ENCODE measurements at regions of chr3 and their contacts with region 1.

Region 1: GRCh38 chr3:149936812-149937233 is 33.9 kb downstream of the PFN2 start:
- DNase-seq: no peak
- ATAC-seq: peak; percentile 81 to 88 (median 86)
- H3K4me3 ChIP-seq: peak overlapping the region; percentile 31
- H3K27ac ChIP-seq: no peak overlapping the region
- H3K4me1 ChIP-seq: peaks cover 8% of the 10 kb centered on the region
- H3K27me3 ChIP-seq: no peaks in the 10 kb centered on the region
- CTCF ChIP-seq: peak; percentile 79

Region 2: DNA sequence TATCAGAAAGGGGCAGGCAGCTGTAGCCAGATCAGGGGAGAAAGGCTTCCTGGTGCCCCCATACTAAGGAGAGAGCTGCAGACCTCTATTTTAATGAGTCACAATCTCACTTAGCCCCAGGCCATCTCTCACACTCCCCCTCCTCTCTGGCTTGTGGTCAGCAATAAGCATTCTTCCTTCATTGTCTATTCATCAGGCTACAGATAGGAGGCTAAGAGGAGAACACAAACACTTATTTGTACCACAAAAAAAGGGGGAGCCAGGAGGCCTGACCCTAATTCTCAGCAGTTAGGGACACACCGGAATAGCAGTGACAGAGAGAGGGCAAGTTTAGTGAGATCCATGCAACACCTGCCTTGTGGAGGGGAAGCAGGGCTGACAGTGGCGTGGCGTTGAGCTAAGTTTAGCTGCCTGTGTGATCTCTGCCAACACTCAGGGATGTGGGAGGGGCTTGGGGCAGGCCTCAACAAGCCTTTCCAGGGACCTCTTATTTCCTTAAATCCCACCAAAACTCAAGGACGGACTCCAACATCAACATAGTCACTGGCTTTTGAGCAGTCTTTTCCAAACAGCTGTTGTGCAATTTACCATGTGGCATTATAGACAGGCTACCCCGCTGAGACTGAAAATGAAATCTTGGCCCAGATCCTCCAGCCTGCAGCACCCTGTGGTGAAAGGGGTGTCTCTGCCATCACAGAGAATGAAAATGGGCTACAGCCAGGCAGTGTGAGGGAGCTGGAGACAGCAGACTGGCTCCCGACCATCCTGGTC is 279.4 kb after region 1 on chr3:
- intact Hi-C with region 1: loop called (anchors 2 to 5 kb)
- DNase-seq: peak; percentile 47 to 71
- ATAC-seq: peak; percentile 91 to 96 (median 94)
- H3K4me3 ChIP-seq: peak overlapping the region; percentile 38
- H3K27ac ChIP-seq: peak overlapping the region; percentile 79
- H3K4me1 ChIP-seq: peaks cover 9% of the 10 kb centered on the region
- H3K27me3 ChIP-seq: no peaks in the 10 kb centered on the region
- CTCF ChIP-seq: no peak

Measured in psoas muscle (tissue), 8 donors.